Cardiac septum (tissue), 1 donor: ENCODE measurements at regions of chr12 and their contacts with region 1.

Region 1: DNA sequence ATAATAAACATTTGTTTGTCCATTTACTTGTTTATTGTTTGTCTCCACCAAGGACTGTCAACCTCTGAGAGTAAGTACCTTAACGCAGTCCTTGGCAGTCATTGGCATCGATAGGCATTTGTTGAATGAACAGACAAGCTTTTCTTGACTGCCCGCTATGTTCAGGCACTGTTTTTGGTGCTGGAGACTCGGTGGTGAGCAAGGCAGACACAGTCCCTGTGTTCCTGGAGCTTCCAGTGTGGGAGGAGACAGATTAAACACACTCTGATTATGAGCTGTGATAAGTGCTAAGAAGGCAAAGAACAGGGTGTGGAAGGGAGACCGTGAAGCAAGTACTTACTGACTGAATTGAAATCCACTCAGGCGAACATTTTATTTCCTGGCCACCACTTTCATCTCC is 1.2 kb downstream of the ATP6V0A2 start:
- DNase-seq: no peak

Region 2: GRCh38 chr12:123633379-123634141 is 79.8 kb before region 1 on chr12 and contains the starts of genes EIF2B1 and GTF2H3:
- intact Hi-C with region 1: loop called (anchors 10 kb)
- DNase-seq: peak; percentile 96
- total RNA-seq, gene EIF2B1: 27.9 TPM
- total RNA-seq, gene GTF2H3: 12.9 TPM

Region 3: GRCh38 chr12:123972457-123973401 is 259.3 kb after region 1 on chr12 and contains the starts of genes CCDC92 and ZNF664:
- intact Hi-C with region 1: loop called (anchors 5 kb)
- DNase-seq: peak; percentile 95
- total RNA-seq, gene CCDC92: 48.3 TPM
- total RNA-seq, gene ZNF664: 94.0 TPM